CD4-positive, alpha-beta memory T cell (primary cell): ENCODE measurements at regions of chr1 and their contacts with region 1.

Region 1: DNA sequence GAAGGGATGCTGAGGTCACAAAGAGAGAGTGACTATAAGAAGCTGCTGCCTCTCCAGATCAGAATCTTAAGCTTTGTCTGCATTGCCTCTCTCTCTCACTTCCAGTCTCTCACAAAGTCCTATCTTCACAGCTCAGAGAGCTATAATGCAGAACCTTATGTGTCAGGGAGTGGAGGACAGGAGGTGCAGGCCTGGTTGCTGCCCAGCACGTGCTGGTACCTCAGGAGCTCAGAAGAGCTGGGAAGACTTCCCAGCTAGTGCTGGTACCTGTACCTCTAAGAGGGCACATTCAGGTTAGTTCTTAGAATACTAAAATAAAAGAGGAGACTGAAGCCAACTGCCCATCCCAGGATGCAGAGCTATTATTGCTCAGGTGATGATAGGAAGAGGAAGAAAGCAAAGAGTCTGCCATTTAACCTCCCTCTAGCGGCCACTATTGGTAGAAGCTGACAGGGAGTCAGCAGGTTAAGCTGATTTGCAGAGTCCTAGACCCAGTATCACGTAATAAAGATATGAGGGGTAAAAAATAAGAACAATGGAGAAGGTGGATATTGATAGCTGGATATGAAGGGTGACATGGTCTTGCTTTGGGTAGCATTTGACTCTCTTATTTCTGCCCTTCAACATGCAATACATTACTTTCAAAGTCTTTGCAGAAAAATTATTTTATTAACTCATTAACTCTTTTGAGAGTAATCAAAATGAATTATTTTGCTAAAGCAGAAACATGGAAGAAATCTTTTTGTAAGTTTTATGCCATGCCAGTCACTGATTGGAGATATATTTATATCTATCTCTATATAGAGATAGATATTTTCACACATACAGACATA is 138.1 kb upstream of the HMCN1 start:
- DNase-seq: peak; percentile 56 to 67 (median 62)
- H3K4me3 ChIP-seq: no peak overlapping the region
- H3K4me3 Mint-ChIP-seq: no peak overlapping the region
- H3K27ac ChIP-seq: no peak overlapping the region
- H3K27ac Mint-ChIP-seq: peak overlapping the region in 6 of 7 donors; percentile 14 to 72 (median 39)
- H3K4me1 ChIP-seq: peaks cover 27% of the 10 kb centered on the region
- H3K4me1 Mint-ChIP-seq: peaks cover 31 to 39% (median 33%) of the 10 kb centered on the region in 4 donors
- H3K27me3 ChIP-seq: no peaks in the 10 kb centered on the region
- H3K27me3 Mint-ChIP-seq: no peaks in the 10 kb centered on the region

Region 2: DNA sequence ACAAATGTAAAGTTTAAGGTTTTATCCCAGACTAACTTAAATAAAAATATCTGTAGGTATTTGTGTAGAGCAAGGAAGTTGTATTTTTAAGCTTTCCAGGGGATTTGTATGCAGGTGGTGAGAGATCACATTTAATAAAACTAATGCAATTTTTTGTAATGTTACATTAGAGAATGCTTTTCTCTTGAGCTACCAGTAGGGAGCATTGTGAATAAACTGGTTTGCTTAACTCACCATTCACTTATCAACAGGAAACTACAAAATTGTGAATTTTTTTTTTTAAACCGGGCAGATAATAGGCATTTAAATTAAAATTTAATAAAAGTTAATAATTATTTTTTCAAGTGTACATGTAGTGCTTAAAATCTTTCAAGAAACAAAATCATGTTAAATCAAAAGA is 357.6 kb before region 1 on chr1:
- CTCF ChIA-PET with region 1: interaction called, 58 read pairs
- POLR2A ChIA-PET with region 1: interaction called, 11 read pairs
- intact Hi-C with region 1: loop called (anchors 1 kb)
- DNase-seq: peak in 4 of 5 donors; percentile 29 to 44 (median 35)
- H3K4me3 ChIP-seq: no peak overlapping the region
- H3K4me3 Mint-ChIP-seq: peak overlapping the region in 4 of 8 donors; percentile 4 to 60 (median 32)
- H3K27ac ChIP-seq: no peak overlapping the region
- H3K27ac Mint-ChIP-seq: peak overlapping the region in 2 of 7 donors; percentile 23 to 70
- H3K4me1 ChIP-seq: peaks cover 25% of the 10 kb centered on the region
- H3K4me1 Mint-ChIP-seq: peaks cover 17 to 35% (median 27%) of the 10 kb centered on the region in 4 donors
- H3K27me3 ChIP-seq: no peaks in the 10 kb centered on the region
- H3K27me3 Mint-ChIP-seq: no peaks in the 10 kb centered on the region

Region 3: GRCh38 chr1:185520188-185520935 is 75.7 kb before region 1 on chr1:
- CTCF ChIA-PET with region 1: no interaction called
- POLR2A ChIA-PET with region 1: no interaction called
- intact Hi-C with region 1: no loop called
- DNase-seq: no peak
- H3K4me3 ChIP-seq: no peak overlapping the region
- H3K4me3 Mint-ChIP-seq: no peak overlapping the region
- H3K27ac ChIP-seq: no peak overlapping the region
- H3K27ac Mint-ChIP-seq: no peak overlapping the region
- H3K4me1 ChIP-seq: no peaks in the 10 kb centered on the region
- H3K4me1 Mint-ChIP-seq: peaks cover 0 to 1% (median 0%) of the 10 kb centered on the region in 4 donors
- H3K27me3 ChIP-seq: no peaks in the 10 kb centered on the region
- H3K27me3 Mint-ChIP-seq: peaks cover 0 to 1% of the 10 kb centered on the region in 2 donors

Region 4: GRCh38 chr1:185541871-185542301 is 54.2 kb before region 1 on chr1:
- CTCF ChIA-PET with region 1: interaction called, 11 read pairs
- POLR2A ChIA-PET with region 1: interaction called, 4 read pairs
- intact Hi-C with region 1: loop called (anchors 5 kb)
- DNase-seq: no peak
- H3K4me3 ChIP-seq: no peak overlapping the region
- H3K4me3 Mint-ChIP-seq: no peak overlapping the region
- H3K27ac ChIP-seq: no peak overlapping the region
- H3K27ac Mint-ChIP-seq: no peak overlapping the region
- H3K4me1 ChIP-seq: no peaks in the 10 kb centered on the region
- H3K4me1 Mint-ChIP-seq: peaks cover 6 to 9% (median 7%) of the 10 kb centered on the region in 4 donors
- H3K27me3 ChIP-seq: no peaks in the 10 kb centered on the region
- H3K27me3 Mint-ChIP-seq: peaks cover 0 to 4% of the 10 kb centered on the region in 2 donors

Region 5: GRCh38 chr1:185566995-185567394 is 29.1 kb before region 1 on chr1:
- CTCF ChIA-PET with region 1: interaction called, 61 read pairs
- POLR2A ChIA-PET with region 1: interaction called, 36 read pairs
- intact Hi-C with region 1: loop called (anchors 1 kb)
- DNase-seq: peak; percentile 85 to 94 (median 91)
- H3K4me3 ChIP-seq: peak overlapping the region in 1 of 2 donors; percentile 21
- H3K4me3 Mint-ChIP-seq: peak overlapping the region; percentile 26 to 87 (median 75)
- H3K27ac ChIP-seq: peak overlapping the region; percentile 80
- H3K27ac Mint-ChIP-seq: peak overlapping the region; percentile 94 to 100 (median 99)
- H3K4me1 ChIP-seq: peaks cover 81% of the 10 kb centered on the region
- H3K4me1 Mint-ChIP-seq: peaks cover 62 to 91% (median 75%) of the 10 kb centered on the region in 4 donors
- H3K27me3 ChIP-seq: no peaks in the 10 kb centered on the region
- H3K27me3 Mint-ChIP-seq: no peaks in the 10 kb centered on the region

Region 6: GRCh38 chr1:185581961-185582725 is 13.9 kb before region 1 on chr1:
- CTCF ChIA-PET with region 1: interaction called, 49 read pairs
- POLR2A ChIA-PET with region 1: no interaction called
- intact Hi-C with region 1: no loop called
- DNase-seq: no peak
- H3K4me3 ChIP-seq: no peak overlapping the region
- H3K4me3 Mint-ChIP-seq: no peak overlapping the region
- H3K27ac ChIP-seq: no peak overlapping the region
- H3K27ac Mint-ChIP-seq: no peak overlapping the region
- H3K4me1 ChIP-seq: no peaks in the 10 kb centered on the region
- H3K4me1 Mint-ChIP-seq: peaks cover 0 to 3% (median 0%) of the 10 kb centered on the region in 4 donors
- H3K27me3 ChIP-seq: no peaks in the 10 kb centered on the region
- H3K27me3 Mint-ChIP-seq: no peaks in the 10 kb centered on the region

Region 7: GRCh38 chr1:185670187-185670627 is 74.2 kb after region 1 on chr1:
- CTCF ChIA-PET with region 1: interaction called, 22 read pairs
- POLR2A ChIA-PET with region 1: no interaction called
- intact Hi-C with region 1: loop called (anchors 5 kb)
- DNase-seq: peak; percentile 44 to 59 (median 57)
- H3K4me3 ChIP-seq: no peak overlapping the region
- H3K4me3 Mint-ChIP-seq: no peak overlapping the region
- H3K27ac ChIP-seq: no peak overlapping the region
- H3K27ac Mint-ChIP-seq: peak overlapping the region in 3 of 7 donors; percentile 3 to 31 (median 21)
- H3K4me1 ChIP-seq: peaks cover 14% of the 10 kb centered on the region
- H3K4me1 Mint-ChIP-seq: peaks cover 14 to 28% (median 20%) of the 10 kb centered on the region in 4 donors
- H3K27me3 ChIP-seq: no peaks in the 10 kb centered on the region
- H3K27me3 Mint-ChIP-seq: no peaks in the 10 kb centered on the region

Region 8: GRCh38 chr1:185694081-185694480 is 98.0 kb after region 1 on chr1:
- CTCF ChIA-PET with region 1: interaction called, 11 read pairs
- POLR2A ChIA-PET with region 1: no interaction called
- intact Hi-C with region 1: no loop called
- DNase-seq: peak in 3 of 5 donors; percentile 12 to 24 (median 17)
- H3K4me3 ChIP-seq: peak overlapping the region; percentile 4 to 53
- H3K4me3 Mint-ChIP-seq: peak overlapping the region; percentile 80 to 91 (median 86)
- H3K27ac ChIP-seq: peak overlapping the region; percentile 40
- H3K27ac Mint-ChIP-seq: peak overlapping the region; percentile 84 to 94 (median 92)
- H3K4me1 ChIP-seq: peaks cover 20% of the 10 kb centered on the region
- H3K4me1 Mint-ChIP-seq: peaks cover 13 to 19% (median 16%) of the 10 kb centered on the region in 4 donors
- H3K27me3 ChIP-seq: no peaks in the 10 kb centered on the region
- H3K27me3 Mint-ChIP-seq: peaks cover 6 to 8% of the 10 kb centered on the region in 2 donors